ENCODE measurements at regions of chr3 and their contacts with region 1.

Region 1: GRCh38 chr3:192917404-192918274 is at the start of gene MB21D2:
- DNase-seq: peak; percentile 52
- H3K4me3 Mint-ChIP-seq: peak within 1 kb of the TSS; percentile 94
- H3K27ac Mint-ChIP-seq: peak within 1 kb of the TSS; percentile 87
- H3K4me1 Mint-ChIP-seq: peaks cover 21% of the 10 kb centered on the region
- H3K27me3 Mint-ChIP-seq: peaks cover 45% of the 10 kb centered on the region
- total RNA-seq, gene MB21D2: 6.4 to 6.5 TPM

Region 2: GRCh38 chr3:192566706-192567290 is 350.8 kb before region 1 on chr3:
- CTCF ChIA-PET with region 1: no interaction called
- intact Hi-C with region 1: loop called (anchors 5 kb)
- DNase-seq: peak; percentile 85
- H3K4me3 Mint-ChIP-seq: no peak overlapping the region
- H3K27ac Mint-ChIP-seq: no peak overlapping the region
- H3K4me1 Mint-ChIP-seq: peaks cover 8% of the 10 kb centered on the region
- H3K27me3 Mint-ChIP-seq: peaks cover 26% of the 10 kb centered on the region

Region 3: DNA sequence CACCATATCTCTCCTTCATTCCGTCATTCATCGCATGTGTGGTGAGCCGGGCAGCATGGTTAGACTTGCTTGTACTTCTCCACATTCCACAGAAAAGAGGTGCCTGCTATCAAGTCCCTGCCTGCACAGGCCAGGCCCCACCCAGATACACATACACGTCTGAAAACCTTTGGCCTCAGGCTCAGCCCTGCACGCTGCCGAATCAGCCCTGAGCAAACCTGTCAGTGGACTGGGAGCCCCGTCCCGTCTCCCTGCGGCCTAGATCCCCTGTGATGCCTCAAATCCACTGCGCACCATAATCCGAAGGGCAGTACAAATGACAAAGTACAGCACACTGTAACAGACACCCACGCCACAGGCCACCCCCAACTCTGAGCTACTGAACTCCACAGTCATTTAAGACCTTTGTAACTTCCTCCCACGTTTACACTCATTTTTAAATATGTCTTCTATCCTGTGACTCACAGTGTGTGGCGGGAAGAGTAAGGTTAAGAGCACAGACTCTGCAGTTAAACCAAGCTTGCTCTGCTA is 67.1 kb before region 1 on chr3:
- CTCF ChIA-PET with region 1: no interaction called
- intact Hi-C with region 1: loop called (anchors 1 kb)
- DNase-seq: peak; percentile 73
- H3K4me3 Mint-ChIP-seq: peak overlapping the region; percentile 22
- H3K27ac Mint-ChIP-seq: peak overlapping the region; percentile 84
- H3K4me1 Mint-ChIP-seq: peaks cover 47% of the 10 kb centered on the region
- H3K27me3 Mint-ChIP-seq: peaks cover 5% of the 10 kb centered on the region

Region 4: DNA sequence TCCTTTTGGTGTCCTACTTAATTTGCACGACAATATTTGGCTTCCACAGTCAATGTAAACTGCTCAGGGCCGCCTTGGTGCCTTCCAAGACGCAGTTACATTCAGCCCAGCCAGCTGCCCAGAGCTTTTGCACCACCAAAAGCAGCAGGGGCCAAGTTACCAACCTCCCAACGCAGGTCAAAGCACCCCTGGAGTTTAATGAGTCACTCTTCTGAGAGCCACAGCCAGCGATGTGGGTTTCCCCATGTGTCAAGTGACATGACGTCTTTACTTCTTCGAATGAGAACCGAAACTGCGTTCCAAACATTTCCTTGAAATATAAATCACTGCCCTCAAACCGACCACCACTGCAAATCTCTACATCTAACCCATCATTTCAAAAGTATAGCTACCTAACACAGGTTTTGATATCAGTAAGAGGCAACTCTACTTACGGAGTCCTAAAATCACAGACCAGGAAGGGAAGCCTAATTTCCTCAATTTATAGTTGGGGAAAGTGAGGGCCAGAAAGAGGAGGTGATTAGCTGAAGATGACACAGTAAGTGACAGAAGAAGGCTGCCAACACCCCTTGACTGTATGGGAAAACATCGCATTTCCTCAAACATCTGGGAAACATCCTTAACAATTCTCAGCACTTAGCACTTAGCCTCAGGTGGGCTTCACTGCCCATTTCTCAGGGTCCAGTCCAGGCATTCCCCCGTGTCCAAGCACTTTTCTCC is 24.5 kb before region 1 on chr3:
- CTCF ChIA-PET with region 1: interaction called, 10 read pairs
- intact Hi-C with region 1: loop called (anchors 1 kb)
- DNase-seq: peak; percentile 86
- H3K4me3 Mint-ChIP-seq: peak overlapping the region; percentile 26
- H3K27ac Mint-ChIP-seq: peak overlapping the region; percentile 77
- H3K4me1 Mint-ChIP-seq: peaks cover 83% of the 10 kb centered on the region
- H3K27me3 Mint-ChIP-seq: peaks cover 26% of the 10 kb centered on the region

Region 5: GRCh38 chr3:192957441-192958021 is 39.9 kb after region 1 on chr3:
- CTCF ChIA-PET with region 1: no interaction called
- intact Hi-C with region 1: loop called (anchors 2 kb)
- DNase-seq: peak; percentile 14
- H3K4me3 Mint-ChIP-seq: no peak overlapping the region
- H3K27ac Mint-ChIP-seq: no peak overlapping the region
- H3K4me1 Mint-ChIP-seq: peaks cover 23% of the 10 kb centered on the region
- H3K27me3 Mint-ChIP-seq: no peaks in the 10 kb centered on the region